ENCODE measurements at regions of chr5 and their contacts with region 1.

Region 1: DNA sequence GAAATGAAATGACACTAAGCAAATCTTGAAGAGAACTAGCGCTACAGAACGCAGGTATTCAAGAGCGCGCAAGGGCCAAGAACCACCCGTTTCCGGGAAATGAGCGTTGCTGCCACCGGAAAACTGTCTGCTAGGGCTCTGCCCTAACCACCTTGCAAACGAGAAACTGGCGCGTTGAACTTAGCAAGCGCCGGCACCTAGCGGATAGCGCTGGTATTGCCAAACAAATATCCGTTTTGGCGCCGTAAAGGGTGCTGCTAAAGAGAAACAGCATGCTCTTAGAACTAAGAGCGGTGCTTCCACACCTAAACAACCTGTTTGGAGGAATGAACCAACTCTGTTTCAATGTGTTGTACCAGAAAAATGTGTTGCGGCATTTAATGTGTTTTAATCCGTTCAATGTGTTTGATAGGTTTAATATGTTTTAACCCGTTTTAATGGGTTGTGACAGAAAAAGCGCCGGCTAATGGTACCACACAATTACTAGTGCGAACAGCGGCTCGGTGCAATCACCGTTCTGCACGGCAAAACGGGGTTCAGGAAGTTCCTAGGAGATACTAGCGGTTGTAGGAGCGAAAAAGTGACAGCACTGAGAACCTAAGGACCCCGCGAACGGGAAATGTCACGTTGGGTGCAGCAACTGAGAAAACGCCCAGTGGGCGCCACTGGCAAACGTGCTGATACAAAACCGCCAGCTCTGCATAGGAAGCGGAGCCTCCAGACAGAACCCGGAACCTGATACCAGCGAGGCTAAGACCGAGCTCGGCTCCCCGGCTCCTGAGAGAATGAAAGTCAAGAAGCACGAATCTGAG is at the start of gene ANXA2R:
- DNase-seq: peak; percentile 63
- H3K4me3 ChIP-seq: peak within 1 kb of the TSS; percentile 67 to 80 (median 78)
- H3K27ac ChIP-seq: peak within 1 kb of the TSS; percentile 93 to 98 (median 96)
- H3K4me1 ChIP-seq: peaks cover 0 to 82% (median 4%) of the 10 kb centered on the region in 3 donors
- H3K27me3 ChIP-seq: peaks cover 0 to 87% (median 4%) of the 10 kb centered on the region in 4 donors
- CTCF ChIP-seq: peak; percentile 75 to 96 (median 86)
- POLR2A ChIP-seq: peak in 2 of 4 donors; percentile 16 to 33
- total RNA-seq, gene ANXA2R: 0.57 to 2.5 (median 1.6) TPM

Region 2: GRCh38 chr5:42811591-42812446 is 228.7 kb before region 1 on chr5 and contains the start of gene SELENOP:
- intact Hi-C with region 1: loop called (anchors 10 kb)
- DNase-seq: no peak
- H3K4me3 ChIP-seq: peak within 1 kb of the TSS; percentile 41 to 67 (median 56)
- H3K27ac ChIP-seq: peak within 1 kb of the TSS; percentile 77 to 89 (median 83)
- H3K4me1 ChIP-seq: peaks cover 10 to 71% (median 21%) of the 10 kb centered on the region in 3 donors
- H3K27me3 ChIP-seq: no peaks in the 10 kb centered on the region
- CTCF ChIP-seq: no peak
- POLR2A ChIP-seq: peak in 3 of 4 donors; percentile 70 to 94 (median 78)
- total RNA-seq, gene SELENOP: 74.7 to 381 (median 211) TPM

Region 3: DNA sequence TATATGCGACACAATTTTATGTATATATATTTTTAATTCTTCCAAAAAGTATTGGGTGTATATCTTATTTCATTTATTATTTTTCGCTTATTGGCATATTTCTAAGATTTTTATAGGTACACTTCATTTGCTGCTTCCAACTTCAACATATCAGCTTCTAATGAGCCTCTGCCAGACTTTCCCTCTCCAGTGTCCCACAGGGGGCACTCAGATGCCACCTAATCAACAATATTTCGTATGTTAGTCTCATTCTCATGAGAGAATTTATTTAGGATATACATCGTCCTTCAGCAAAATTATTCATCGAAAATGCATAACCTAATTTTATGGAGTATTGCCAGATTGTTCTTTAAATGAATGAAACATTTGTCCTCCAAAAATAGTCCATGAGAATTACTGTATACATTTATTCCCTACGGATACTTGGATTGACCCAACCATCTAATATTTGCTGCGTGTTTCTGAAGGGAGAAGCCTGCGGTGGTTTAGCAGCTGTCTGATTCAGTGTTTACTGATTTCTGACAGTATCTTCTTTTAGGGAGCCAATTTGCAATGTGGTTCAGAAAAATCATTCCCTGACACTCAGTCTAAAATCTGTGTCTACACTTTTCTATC is 128.2 kb before region 1 on chr5:
- intact Hi-C with region 1: loop called (anchors 10 kb)
- DNase-seq: no peak
- H3K4me3 ChIP-seq: no peak overlapping the region
- H3K27ac ChIP-seq: no peak overlapping the region
- H3K4me1 ChIP-seq: peaks cover 0 to 12% (median 4%) of the 10 kb centered on the region in 3 donors
- H3K27me3 ChIP-seq: peaks cover 0 to 13% (median 0%) of the 10 kb centered on the region in 4 donors
- CTCF ChIP-seq: peak in 3 of 6 experiments; percentile 14 to 59 (median 45)
- POLR2A ChIP-seq: no peak

Region 4: DNA sequence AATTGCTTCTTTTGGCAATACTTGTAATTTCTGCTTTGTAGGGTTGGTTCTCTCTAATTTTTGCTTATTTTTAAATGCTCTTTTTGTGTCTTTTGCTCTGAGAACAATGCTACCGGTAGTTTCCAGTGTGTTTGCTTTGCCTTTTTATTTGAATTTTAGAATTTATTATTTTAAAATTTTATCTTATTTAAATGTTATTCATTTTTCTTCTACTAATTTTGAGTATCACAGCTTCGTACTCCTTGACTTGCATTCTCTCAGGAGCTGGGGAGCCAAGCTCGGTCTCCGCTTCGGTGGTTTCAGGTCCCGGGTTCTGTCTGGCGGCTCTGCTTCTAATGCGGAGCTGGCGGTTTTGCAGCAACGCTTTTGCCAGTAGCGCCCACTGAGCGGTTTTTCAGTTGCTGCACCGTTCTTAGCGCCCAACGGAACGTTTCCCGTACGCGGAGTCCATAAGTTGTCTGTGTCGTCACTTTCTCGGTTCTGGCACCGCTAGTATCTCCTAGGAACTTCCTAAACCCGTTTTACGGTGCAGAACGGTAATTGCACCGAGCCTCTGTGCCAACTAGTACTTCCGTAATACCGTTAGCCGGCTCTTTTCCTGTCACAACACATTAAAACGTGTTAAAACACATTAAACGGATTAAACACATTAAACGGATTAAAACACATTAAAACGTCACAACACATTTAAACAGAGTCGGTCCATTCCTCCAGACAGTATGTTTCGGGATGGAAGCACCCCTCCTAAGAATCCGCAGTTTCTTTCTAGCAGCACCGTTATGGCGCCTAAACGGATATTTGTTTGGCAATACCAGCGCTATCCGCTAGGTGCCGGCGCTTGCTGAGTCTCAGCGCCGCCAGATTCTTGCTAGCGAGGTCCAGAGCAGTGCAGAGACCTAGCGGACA is 46.0 kb before region 1 on chr5:
- intact Hi-C with region 1: loop called (anchors 2 kb)
- DNase-seq: peak; percentile 49
- H3K4me3 ChIP-seq: peak overlapping the region; percentile 16 to 73 (median 60)
- H3K27ac ChIP-seq: peak overlapping the region; percentile 68 to 97 (median 90)
- H3K4me1 ChIP-seq: peaks cover 0 to 53% (median 4%) of the 10 kb centered on the region in 3 donors
- H3K27me3 ChIP-seq: peaks cover 0 to 100% (median 24%) of the 10 kb centered on the region in 4 donors
- CTCF ChIP-seq: peak; percentile 82 to 93 (median 86)
- POLR2A ChIP-seq: peak in 1 of 4 donors; percentile 18

Region 5: GRCh38 chr5:43014522-43014921 is 26.0 kb before region 1 on chr5:
- intact Hi-C with region 1: loop called (anchors 2 kb)
- DNase-seq: no peak
- H3K4me3 ChIP-seq: no peak overlapping the region
- H3K27ac ChIP-seq: no peak overlapping the region
- H3K4me1 ChIP-seq: peaks cover 0 to 41% (median 28%) of the 10 kb centered on the region in 3 donors
- H3K27me3 ChIP-seq: peaks cover 0 to 58% (median 3%) of the 10 kb centered on the region in 4 donors
- CTCF ChIP-seq: no peak
- POLR2A ChIP-seq: no peak

Measured in esophagus squamous epithelium (tissue), 5 donors.